ENCODE measurements at regions of chr2 and their contacts with region 1.

Region 1: GRCh38 chr2:43218155-43218728 is 8.2 kb downstream of the ZFP36L2 start:
- DNase-seq: no peak
- H3K4me3 Mint-ChIP-seq: peak overlapping the region; percentile 100
- H3K27ac Mint-ChIP-seq: peak overlapping the region; percentile 97
- H3K4me1 Mint-ChIP-seq: peaks cover 50% of the 10 kb centered on the region
- H3K27me3 Mint-ChIP-seq: no peaks in the 10 kb centered on the region

Region 2: DNA sequence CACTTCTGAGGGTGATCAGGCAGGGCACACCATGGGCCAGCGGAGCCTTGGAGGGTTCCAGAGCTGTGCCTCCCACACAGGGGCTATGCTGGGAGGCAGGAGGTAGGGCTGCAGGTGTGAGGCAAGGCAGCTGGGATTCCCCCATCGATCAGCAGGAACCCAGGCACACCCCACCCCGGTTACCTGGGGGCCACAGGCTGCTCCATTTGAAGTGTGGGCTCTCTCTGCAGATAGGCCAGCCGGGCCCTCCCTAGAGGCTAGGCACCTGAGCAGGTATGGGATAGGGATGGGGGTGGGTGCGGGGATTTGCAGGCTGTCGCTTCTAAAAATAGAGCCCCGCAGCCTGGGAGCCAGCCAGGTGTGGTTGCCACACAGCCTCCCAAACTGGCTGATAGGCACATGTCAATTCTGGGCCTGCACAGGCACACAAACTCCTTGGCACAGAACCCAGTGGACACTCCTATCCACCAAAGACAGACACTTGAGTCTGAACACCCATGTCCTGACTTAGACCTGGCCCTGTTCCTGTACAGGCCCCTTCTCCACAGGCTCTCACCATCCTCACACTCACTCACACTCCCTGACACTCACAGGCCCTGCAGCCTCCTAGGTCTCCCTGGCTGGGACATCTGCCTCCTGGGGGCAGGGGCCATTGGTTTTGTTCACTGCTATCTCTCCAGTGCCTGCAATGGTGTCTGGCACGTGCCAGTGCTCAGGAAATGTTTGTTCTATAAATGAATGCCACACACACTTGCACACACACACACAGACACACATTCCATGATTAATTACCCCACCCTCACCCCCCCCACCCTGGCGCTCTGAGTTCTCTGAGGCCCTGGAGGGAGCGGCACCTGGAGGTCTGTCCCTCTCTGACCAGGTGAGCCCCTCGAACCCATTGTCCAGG is 65.2 kb before region 1 on chr2:
- CTCF ChIA-PET with region 1: no interaction called
- POLR2A ChIA-PET with region 1: no interaction called
- DNase-seq: no peak
- H3K4me3 Mint-ChIP-seq: no peak overlapping the region
- H3K27ac Mint-ChIP-seq: no peak overlapping the region
- H3K4me1 Mint-ChIP-seq: peaks cover 83% of the 10 kb centered on the region
- H3K27me3 Mint-ChIP-seq: no peaks in the 10 kb centered on the region

Region 3: DNA sequence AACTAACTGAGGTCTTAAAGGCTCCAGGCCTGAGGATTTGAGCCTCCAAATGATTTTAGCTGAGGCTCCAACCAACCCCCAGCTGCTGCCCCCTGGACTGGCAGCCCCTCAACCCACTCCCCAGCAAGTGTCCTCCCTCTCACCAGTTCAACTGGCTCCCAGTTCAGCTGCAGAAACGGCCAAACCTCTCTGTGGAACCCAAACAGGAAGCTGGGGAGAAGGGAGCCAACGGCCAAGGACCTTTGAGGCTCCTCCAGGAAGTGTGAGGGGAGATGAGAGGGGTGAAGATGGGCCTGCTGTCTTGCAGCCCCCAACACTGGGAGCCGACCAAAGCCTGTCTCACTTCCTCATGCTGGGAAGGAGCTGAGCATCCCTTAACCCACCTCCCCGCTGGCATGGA is 16.7 kb before region 1 on chr2:
- CTCF ChIA-PET with region 1: interaction called, 17 read pairs
- POLR2A ChIA-PET with region 1: interaction called, 3 read pairs
- DNase-seq: no peak
- H3K4me3 Mint-ChIP-seq: no peak overlapping the region
- H3K27ac Mint-ChIP-seq: peak overlapping the region; percentile 46
- H3K4me1 Mint-ChIP-seq: peaks cover 34% of the 10 kb centered on the region
- H3K27me3 Mint-ChIP-seq: no peaks in the 10 kb centered on the region

Measured in activated CD4-positive, alpha-beta T cell treated with anti-CD3 and anti-CD28 coated beads, Interleukin-2, amount 10 ng/mL, durations not matched to agents 7 days and 5 days (primary cell).